AG04450 (cell line): ENCODE measurements at regions of chr12 and their contacts with region 1.

Region 1: GRCh38 chr12:98490501-98491453 is 24.6 kb upstream of the TMPO start:
- DNase-seq: peak; percentile 76
- H3K4me3 ChIP-seq: no peak overlapping the region
- H3K27ac ChIP-seq: peak overlapping the region; percentile 55
- H3K27me3 ChIP-seq: no peaks in the 10 kb centered on the region
- CTCF ChIP-seq: peak; percentile 94

Region 2: GRCh38 chr12:98296462-98297079 is 194.2 kb before region 1 on chr12:
- CTCF ChIA-PET with region 1: no interaction called
- POLR2A ChIA-PET with region 1: no interaction called
- DNase-seq: no peak
- H3K4me3 ChIP-seq: no peak overlapping the region
- H3K27ac ChIP-seq: no peak overlapping the region
- H3K27me3 ChIP-seq: no peaks in the 10 kb centered on the region
- CTCF ChIP-seq: no peak

Region 3: GRCh38 chr12:98379106-98379505 is 111.7 kb before region 1 on chr12:
- CTCF ChIA-PET with region 1: no interaction called
- POLR2A ChIA-PET with region 1: no interaction called
- DNase-seq: no peak
- H3K4me3 ChIP-seq: no peak overlapping the region
- H3K27ac ChIP-seq: no peak overlapping the region
- H3K27me3 ChIP-seq: peaks cover 10% of the 10 kb centered on the region
- CTCF ChIP-seq: no peak

Region 4: GRCh38 chr12:98418357-98419075 is 72.3 kb before region 1 on chr12:
- CTCF ChIA-PET with region 1: interaction called, 13 read pairs
- POLR2A ChIA-PET with region 1: no interaction called
- DNase-seq: peak; percentile 83
- H3K4me3 ChIP-seq: peak overlapping the region; percentile 50
- H3K27ac ChIP-seq: peak overlapping the region; percentile 80
- H3K27me3 ChIP-seq: no peaks in the 10 kb centered on the region
- CTCF ChIP-seq: no peak

Region 5: DNA sequence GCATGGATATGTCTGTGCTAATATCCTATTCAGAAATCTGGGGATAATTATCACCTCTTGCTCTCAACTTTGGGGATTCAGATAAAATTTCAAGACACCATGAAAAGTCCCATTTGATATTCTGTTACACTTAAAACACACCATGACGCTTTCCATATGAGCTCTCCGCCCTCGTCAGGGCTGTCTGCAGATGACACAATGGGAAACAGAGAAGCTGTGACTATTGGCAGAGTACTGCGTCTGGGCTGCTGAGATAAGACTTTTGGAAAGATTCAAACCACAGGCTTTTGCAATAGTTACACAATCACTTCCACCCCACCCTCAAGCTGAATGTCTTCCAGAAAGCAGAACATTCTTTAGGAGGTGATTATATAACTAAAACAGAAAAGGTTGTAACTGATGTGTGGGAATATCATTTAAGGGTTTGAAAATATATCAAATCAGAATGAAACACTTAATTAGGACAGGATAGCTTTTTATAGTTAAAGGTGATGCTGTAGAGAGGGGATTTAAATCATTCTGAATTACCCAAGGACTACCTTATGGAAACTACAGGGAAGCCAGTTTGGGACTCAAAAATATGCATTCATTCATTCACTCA is 50.7 kb before region 1 on chr12:
- CTCF ChIA-PET with region 1: interaction called, 12 read pairs
- POLR2A ChIA-PET with region 1: no interaction called
- DNase-seq: peak; percentile 66
- H3K4me3 ChIP-seq: no peak overlapping the region
- H3K27ac ChIP-seq: no peak overlapping the region
- H3K27me3 ChIP-seq: peaks cover 4% of the 10 kb centered on the region
- CTCF ChIP-seq: no peak

Region 6: GRCh38 chr12:98478606-98479005 is 12.2 kb before region 1 on chr12:
- CTCF ChIA-PET with region 1: interaction called, 13 read pairs
- POLR2A ChIA-PET with region 1: interaction called, 3 read pairs
- DNase-seq: no peak
- H3K4me3 ChIP-seq: no peak overlapping the region
- H3K27ac ChIP-seq: no peak overlapping the region
- H3K27me3 ChIP-seq: no peaks in the 10 kb centered on the region
- CTCF ChIP-seq: no peak

Region 7: GRCh38 chr12:98509063-98509462 is 18.3 kb after region 1 on chr12:
- CTCF ChIA-PET with region 1: interaction called, 51 read pairs
- POLR2A ChIA-PET with region 1: no interaction called
- DNase-seq: no peak
- H3K4me3 ChIP-seq: no peak overlapping the region
- H3K27ac ChIP-seq: no peak overlapping the region
- H3K27me3 ChIP-seq: no peaks in the 10 kb centered on the region
- CTCF ChIP-seq: no peak

Region 8: GRCh38 chr12:98532681-98533304 is 42.0 kb after region 1 on chr12:
- CTCF ChIA-PET with region 1: interaction called, 25 read pairs
- POLR2A ChIA-PET with region 1: no interaction called
- DNase-seq: peak; percentile 23
- H3K4me3 ChIP-seq: no peak overlapping the region
- H3K27ac ChIP-seq: no peak overlapping the region
- H3K27me3 ChIP-seq: no peaks in the 10 kb centered on the region
- CTCF ChIP-seq: peak; percentile 68

Region 9: GRCh38 chr12:98985156-98985555 is 494.4 kb after region 1 on chr12:
- CTCF ChIA-PET with region 1: no interaction called
- POLR2A ChIA-PET with region 1: no interaction called
- DNase-seq: no peak
- H3K4me3 ChIP-seq: no peak overlapping the region
- H3K27ac ChIP-seq: no peak overlapping the region
- H3K27me3 ChIP-seq: no peaks in the 10 kb centered on the region
- CTCF ChIP-seq: no peak

Region 10: GRCh38 chr12:98998697-98999299 is 508.0 kb after region 1 on chr12:
- CTCF ChIA-PET with region 1: interaction called, 15 read pairs
- POLR2A ChIA-PET with region 1: no interaction called
- DNase-seq: no peak
- H3K4me3 ChIP-seq: no peak overlapping the region
- H3K27ac ChIP-seq: no peak overlapping the region
- H3K27me3 ChIP-seq: peaks cover 2% of the 10 kb centered on the region
- CTCF ChIP-seq: peak; percentile 72